A549 (cell line): ENCODE measurements at regions of chr3 and their contacts with region 1.

Region 1: DNA sequence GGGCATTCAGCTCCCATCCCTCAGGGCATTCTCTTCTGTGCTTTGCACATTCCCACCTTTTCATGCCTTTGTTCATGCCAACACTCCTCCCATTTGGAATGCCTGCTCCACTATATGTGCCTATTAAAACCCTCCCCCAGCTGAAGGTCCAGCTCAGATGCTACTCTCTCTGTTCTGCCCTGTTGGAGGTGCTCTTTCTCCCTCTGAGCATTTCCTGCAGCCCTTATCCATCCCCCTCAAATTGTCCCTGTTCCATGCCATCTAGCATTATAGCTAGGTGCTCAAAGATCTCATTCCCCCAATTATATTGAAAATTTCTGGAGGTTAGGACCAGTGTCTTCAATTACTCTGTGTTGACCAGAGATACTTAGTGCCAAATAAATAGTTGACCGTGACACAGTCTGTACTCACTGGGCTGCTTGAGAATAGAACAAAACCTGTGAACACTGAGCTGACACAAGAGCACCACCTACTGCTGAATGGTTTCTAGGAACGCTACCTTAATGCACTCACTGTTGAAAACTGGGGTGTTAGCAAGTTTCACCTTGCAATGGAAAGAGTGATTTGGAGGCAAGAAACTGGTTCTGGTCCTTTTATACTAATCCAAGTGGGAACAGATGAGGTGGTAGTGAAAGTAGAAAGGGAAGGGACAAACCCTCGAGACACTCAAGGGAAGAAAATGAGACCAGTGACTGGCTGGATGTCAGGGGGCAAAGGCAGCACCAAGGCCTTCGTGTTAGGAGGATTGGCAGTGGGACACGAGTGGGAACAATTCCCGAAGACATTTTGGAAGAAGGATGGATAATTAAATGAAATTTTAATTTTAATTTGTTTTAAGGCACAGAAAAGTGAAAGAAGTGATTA is 289.8 kb upstream of the ROPN1 start:
- DNase-seq: peak; percentile 41 to 43
- ATAC-seq: peak; percentile 79 to 91
- H3K4me3 ChIP-seq: no peak overlapping the region
- H3K27ac ChIP-seq: no peak overlapping the region
- H3K4me1 ChIP-seq: no peaks in the 10 kb centered on the region
- CTCF ChIP-seq: peak; percentile 75
- EP300 ChIP-seq: no peak
- POLR2A ChIP-seq: no peak
- RAD21 ChIP-seq: peak; percentile 82 to 87

Region 2: GRCh38 chr3:124014366-124014942 is 267.2 kb before region 1 on chr3:
- CTCF ChIA-PET with region 1: interaction called, 17 read pairs
- POLR2A ChIA-PET with region 1: no interaction called
- DNase-seq: no peak
- ATAC-seq: no peak
- H3K4me3 ChIP-seq: no peak overlapping the region
- H3K27ac ChIP-seq: no peak overlapping the region
- H3K4me1 ChIP-seq: no peaks in the 10 kb centered on the region
- CTCF ChIP-seq: no peak
- EP300 ChIP-seq: no peak
- POLR2A ChIP-seq: no peak
- RAD21 ChIP-seq: no peak

Region 3: GRCh38 chr3:124078953-124079911 is 202.5 kb before region 1 on chr3:
- CTCF ChIA-PET with region 1: interaction called, 10 read pairs
- POLR2A ChIA-PET with region 1: no interaction called
- DNase-seq: peak; percentile 19 to 35
- ATAC-seq: peak in 1 of 2 experiments; percentile 66; a peak in 3 of 6 replicates
- H3K4me3 ChIP-seq: no peak overlapping the region
- H3K27ac ChIP-seq: no peak overlapping the region
- H3K4me1 ChIP-seq: no peaks in the 10 kb centered on the region
- CTCF ChIP-seq: peak; percentile 90
- EP300 ChIP-seq: no peak
- POLR2A ChIP-seq: no peak
- RAD21 ChIP-seq: peak; percentile 78 to 80

Region 4: DNA sequence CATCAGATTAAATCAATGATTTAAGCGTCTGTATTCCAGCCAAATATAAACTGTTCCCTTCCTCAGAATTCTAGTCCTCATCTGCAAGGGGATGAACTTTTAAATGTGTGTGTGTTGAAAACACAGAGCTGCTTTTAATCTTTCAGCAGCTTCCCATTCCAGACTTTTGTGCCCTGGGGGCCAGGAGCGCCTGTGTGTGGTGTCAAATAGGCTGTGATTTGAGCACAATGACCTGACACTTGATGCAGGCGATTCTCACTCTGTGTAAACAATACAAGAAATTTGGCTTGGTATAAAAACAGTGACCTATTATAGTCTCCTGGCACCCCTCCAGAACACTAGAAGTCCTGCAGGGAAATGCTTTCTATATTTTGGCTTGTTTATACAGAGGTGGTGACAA is 15.2 kb before region 1 on chr3:
- CTCF ChIA-PET with region 1: interaction called, 13 read pairs
- POLR2A ChIA-PET with region 1: no interaction called
- DNase-seq: peak in 1 of 2 experiments; percentile 17
- ATAC-seq: no peak; a peak in 1 of 6 replicates
- H3K4me3 ChIP-seq: no peak overlapping the region
- H3K27ac ChIP-seq: no peak overlapping the region
- H3K4me1 ChIP-seq: peaks cover 25% of the 10 kb centered on the region
- CTCF ChIP-seq: no peak
- EP300 ChIP-seq: no peak
- POLR2A ChIP-seq: no peak
- RAD21 ChIP-seq: no peak